ENCODE measurements at regions of chr14 and their contacts with region 1.

Region 1: DNA sequence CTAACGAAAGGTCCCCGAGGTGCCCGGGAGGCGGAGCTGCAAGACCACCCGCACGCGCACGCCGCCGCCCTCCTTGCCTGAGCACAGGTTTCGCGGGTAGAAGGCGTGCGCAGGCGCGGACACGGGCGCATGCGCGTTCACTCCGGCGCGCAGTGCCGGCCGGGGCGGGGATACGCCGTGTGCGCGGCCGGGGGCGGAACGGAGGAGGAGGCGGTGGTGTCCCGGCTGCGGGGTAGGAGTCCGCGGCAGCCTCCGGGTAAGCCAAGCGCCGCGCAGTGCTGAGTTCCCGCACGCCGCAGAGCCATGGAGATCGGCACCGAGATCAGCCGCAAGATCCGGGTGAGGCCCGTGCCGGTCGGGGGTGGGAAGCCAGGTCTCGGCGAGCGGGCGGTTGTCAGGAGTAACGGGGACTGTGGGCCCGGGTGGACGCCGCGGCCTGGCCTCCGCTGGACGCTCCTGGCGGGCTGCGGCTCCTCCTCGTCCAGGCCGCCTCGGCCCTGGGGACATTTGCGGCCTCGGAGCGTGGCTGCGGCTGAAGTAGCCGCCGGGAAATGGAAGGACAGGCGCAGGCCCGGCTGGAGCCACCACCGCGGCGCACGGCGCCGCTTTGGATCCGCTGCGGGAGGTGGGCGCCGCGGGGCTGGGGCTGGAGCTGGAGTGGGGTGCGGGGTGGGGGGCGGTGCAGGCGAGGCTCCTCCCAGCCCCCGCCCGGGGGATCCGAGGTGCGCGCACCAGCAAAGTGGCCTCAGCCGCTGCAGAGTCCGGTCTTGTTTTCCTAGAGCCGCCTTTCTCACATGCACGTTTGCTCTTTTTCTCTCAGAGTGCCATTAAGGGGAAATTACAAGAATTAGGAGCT is at the start of gene ZC3H14:
- DNase-seq: peak; percentile 87
- H3K4me3 Mint-ChIP-seq: peak within 1 kb of the TSS; percentile 86
- H3K27ac Mint-ChIP-seq: peak within 1 kb of the TSS; percentile 82
- H3K4me1 Mint-ChIP-seq: peaks cover 28% of the 10 kb centered on the region
- H3K27me3 Mint-ChIP-seq: peaks cover 9% of the 10 kb centered on the region
- total RNA-seq, gene ZC3H14: 33.3 to 37.9 TPM

Region 2: GRCh38 chr14:87992718-87993628 is 570.1 kb before region 1 on chr14 and contains the start of gene GALC:
- CTCF ChIA-PET with region 1: no interaction called
- intact Hi-C with region 1: loop called (anchors 5 kb)
- DNase-seq: peak; percentile 96
- H3K4me3 Mint-ChIP-seq: peak within 1 kb of the TSS; percentile 81
- H3K27ac Mint-ChIP-seq: peak within 1 kb of the TSS; percentile 96
- H3K4me1 Mint-ChIP-seq: peaks cover 45% of the 10 kb centered on the region
- H3K27me3 Mint-ChIP-seq: no peaks in the 10 kb centered on the region
- total RNA-seq, gene GALC: 11.2 to 12.7 TPM

Region 3: GRCh38 chr14:88189417-88190191 is 373.5 kb before region 1 on chr14:
- CTCF ChIA-PET with region 1: no interaction called
- intact Hi-C with region 1: loop called (anchors 5 kb)
- DNase-seq: peak; percentile 82
- H3K4me3 Mint-ChIP-seq: no peak overlapping the region
- H3K27ac Mint-ChIP-seq: no peak overlapping the region
- H3K4me1 Mint-ChIP-seq: peaks cover 5% of the 10 kb centered on the region
- H3K27me3 Mint-ChIP-seq: peaks cover 16% of the 10 kb centered on the region

Region 4: DNA sequence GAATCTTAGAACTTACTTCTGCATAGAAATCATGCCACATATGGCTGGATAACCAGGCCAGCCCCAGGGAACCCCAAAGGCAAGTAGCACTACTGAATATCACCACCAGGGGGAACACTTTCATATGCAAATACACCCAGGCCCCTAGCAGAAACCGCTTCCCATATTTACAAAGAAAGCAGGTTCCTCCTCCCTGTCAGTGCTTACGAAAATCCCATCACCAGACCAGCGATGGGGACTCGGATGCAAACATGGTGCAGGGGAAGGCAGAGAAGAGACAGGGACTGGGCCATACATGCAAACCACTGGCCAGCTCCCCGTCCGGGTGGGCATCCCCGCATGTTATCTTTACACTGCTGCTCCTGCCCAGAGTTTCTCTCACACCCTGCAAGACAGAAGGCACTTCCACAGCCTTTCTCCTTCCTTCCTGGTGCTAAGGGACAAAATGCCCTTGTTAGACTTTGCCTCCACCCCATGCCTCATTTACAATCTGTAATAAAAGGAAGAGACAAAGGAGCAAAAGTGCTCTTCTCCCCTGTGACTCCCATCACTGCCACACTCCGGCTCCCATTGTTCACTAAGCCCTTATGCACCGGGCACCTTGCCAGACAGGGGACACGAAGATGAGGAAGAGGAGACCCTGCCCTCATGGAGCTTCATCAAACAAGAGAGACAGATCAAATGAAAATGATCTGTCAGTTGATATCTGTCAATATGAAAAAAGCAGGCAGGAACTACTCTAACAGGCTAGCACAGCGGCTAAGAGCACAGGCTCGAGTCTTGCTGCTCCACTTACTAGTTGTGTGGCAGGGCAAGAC is 70.6 kb before region 1 on chr14:
- CTCF ChIA-PET with region 1: interaction called, 4 read pairs
- intact Hi-C with region 1: loop called (anchors 1 kb)
- DNase-seq: peak; percentile 77
- H3K4me3 Mint-ChIP-seq: no peak overlapping the region
- H3K27ac Mint-ChIP-seq: no peak overlapping the region
- H3K4me1 Mint-ChIP-seq: no peaks in the 10 kb centered on the region
- H3K27me3 Mint-ChIP-seq: no peaks in the 10 kb centered on the region

Region 5: DNA sequence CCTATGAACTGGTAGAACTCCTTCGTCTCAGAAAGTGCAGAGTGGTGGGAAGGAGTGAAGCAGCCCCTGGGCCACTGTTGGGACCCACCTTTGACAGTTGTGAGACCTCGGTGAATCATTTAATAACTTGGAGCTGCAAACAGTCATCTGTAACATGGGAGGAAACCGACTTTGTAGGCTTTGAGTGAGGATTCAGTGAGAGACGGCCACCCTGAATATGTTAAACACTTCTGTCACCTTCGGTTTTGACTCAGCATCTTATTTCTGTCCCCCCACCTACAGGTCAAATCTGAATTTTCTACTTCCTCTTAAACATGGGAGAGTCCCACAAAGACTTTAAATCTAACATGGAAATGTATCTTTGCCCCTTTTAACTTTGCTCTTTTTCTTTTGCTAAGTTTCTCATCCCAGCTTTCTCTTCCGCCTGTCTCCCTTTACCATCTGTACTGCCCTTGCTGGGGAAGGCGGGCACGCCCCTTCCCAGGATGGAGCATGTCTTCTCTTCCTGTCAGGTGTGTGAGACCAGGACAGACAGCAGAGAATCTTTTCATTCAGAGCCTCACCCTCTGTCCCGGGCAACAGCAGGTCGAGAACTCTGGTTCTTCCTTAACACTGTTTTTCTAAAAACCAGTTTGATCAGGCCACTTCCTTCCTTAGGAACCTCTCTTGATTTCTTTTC is 36.8 kb after region 1 on chr14:
- CTCF ChIA-PET with region 1: no interaction called
- intact Hi-C with region 1: loop called (anchors 1 kb)
- DNase-seq: peak; percentile 58
- H3K4me3 Mint-ChIP-seq: peak overlapping the region; percentile 6
- H3K27ac Mint-ChIP-seq: peak overlapping the region; percentile 79
- H3K4me1 Mint-ChIP-seq: peaks cover 21% of the 10 kb centered on the region
- H3K27me3 Mint-ChIP-seq: no peaks in the 10 kb centered on the region

Region 6: DNA sequence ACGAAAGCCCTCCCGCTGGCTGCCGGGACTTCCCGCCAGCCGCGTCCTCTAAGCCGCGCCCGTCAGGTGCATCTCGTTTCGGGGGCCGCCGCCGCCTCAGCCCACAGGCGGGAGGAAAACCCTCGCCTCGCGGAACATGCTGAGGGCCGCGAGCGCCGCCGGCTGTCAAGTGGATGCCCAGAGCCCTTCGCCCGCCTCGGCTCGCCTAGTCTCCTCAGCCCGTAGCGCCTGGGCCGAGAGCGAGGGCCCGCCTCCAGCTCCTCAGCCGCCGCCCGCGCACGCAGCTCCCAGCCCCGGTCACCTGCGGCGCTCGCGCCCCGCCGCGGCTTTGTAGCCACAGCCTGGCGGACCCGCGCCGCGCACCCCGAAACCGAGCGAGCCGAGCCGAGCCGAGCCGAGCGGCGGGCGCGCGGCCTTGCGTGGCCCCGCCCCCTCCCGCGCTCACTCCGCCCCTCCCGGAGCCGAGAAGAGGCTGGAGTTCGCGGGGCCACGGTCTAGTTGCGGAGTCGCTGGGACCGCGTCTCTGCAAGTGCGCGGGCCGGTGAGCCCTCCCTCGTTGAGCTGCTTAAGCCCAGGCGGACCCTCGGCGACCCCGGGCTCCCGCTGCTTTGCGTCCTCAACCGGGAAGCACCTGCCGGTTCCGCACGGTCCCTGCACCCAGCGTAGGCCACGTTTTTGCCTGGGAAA is 229.7 kb after region 1 on chr14 and contains the start of gene EML5:
- CTCF ChIA-PET with region 1: no interaction called
- intact Hi-C with region 1: loop called (anchors 1 kb)
- DNase-seq: peak; percentile 86
- H3K4me3 Mint-ChIP-seq: peak within 1 kb of the TSS; percentile 88
- H3K27ac Mint-ChIP-seq: peak within 1 kb of the TSS; percentile 71
- H3K4me1 Mint-ChIP-seq: peaks cover 18% of the 10 kb centered on the region
- H3K27me3 Mint-ChIP-seq: no peaks in the 10 kb centered on the region
- total RNA-seq, gene EML5: 3.7 to 3.8 TPM

Region 7: DNA sequence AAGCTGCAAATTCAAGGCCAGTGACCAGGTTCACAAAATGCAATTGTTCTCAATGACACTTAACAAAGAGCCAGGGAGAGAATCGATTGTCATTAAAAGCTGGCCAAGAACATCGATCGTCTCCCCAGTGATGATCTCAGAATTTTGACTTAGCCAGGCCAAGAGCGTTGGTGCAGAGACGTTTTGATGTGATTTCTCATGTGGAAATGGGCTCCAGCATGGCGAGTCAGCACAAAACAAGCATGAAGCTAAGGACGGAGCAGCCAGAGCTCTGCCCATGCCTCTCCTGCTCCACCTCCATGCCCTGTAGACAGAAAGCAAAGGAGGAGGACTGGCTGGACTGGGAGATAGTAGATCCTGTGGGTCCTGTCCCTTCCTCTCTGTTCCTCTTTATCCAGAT is 583.2 kb after region 1 on chr14:
- CTCF ChIA-PET with region 1: no interaction called
- intact Hi-C with region 1: no loop called
- DNase-seq: no peak
- H3K4me3 Mint-ChIP-seq: no peak overlapping the region
- H3K27ac Mint-ChIP-seq: no peak overlapping the region
- H3K4me1 Mint-ChIP-seq: no peaks in the 10 kb centered on the region
- H3K27me3 Mint-ChIP-seq: no peaks in the 10 kb centered on the region